OCI-LY7 (cell line): ENCODE measurements at regions of chrX and their contacts with region 1.

Region 1: GRCh38 chrX:24371391-24371972 is 11.0 kb downstream of the SUPT20HL1 start:
- DNase-seq: peak; percentile 64
- H3K4me3 ChIP-seq: no peak overlapping the region
- H3K27ac ChIP-seq: no peak overlapping the region
- H3K4me1 ChIP-seq: no peaks in the 10 kb centered on the region
- CTCF ChIP-seq: peak; percentile 74

Region 2: GRCh38 chrX:24561121-24561520 is 189.6 kb after region 1 on chrX:
- CTCF ChIA-PET with region 1: no interaction called
- POLR2A ChIA-PET with region 1: no interaction called
- intact Hi-C with region 1: loop called (anchors 2 kb)
- DNase-seq: peak; percentile 44
- H3K4me3 ChIP-seq: no peak overlapping the region
- H3K27ac ChIP-seq: no peak overlapping the region
- H3K4me1 ChIP-seq: no peaks in the 10 kb centered on the region
- CTCF ChIP-seq: peak; percentile 68